AG04450 (cell line): ENCODE measurements at regions of chr3 and their contacts with region 1.

Region 1: DNA sequence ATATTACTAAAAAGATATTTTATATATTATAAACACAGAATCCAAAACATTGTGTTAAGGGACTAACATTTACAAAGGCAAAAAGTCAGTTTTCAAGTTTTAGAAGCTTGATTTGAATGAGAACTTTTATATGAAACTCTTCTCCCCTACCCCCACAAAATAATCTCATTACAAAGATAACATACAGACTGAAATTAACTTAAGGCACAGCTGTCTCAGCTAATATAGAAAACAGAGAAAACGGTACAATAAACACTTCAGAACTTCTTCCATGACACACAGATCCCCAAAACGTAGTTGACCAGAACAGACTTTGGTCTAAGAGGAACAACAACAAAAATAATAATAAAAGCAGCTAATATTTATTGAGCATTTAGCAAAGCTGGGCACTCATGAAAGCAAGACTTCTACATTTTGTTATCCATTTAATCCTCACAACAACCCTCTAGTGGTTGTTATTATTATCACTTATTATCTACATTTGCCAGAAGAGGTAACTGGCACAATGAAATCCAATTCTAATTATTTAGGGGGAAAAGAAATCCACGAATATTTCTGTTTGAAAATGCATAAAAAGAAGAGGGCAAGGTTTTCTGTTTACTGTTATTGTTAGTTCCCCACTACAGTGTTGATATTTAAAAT is 68.1 kb downstream of the PFN2 start:
- DNase-seq: no peak
- H3K4me3 ChIP-seq: no peak overlapping the region
- H3K27ac ChIP-seq: no peak overlapping the region
- H3K27me3 ChIP-seq: no peaks in the 10 kb centered on the region
- CTCF ChIP-seq: peak; percentile 36

Region 2: GRCh38 chr3:149832086-149832485 is 70.5 kb before region 1 on chr3:
- CTCF ChIA-PET with region 1: no interaction called
- POLR2A ChIA-PET with region 1: no interaction called
- DNase-seq: no peak
- H3K4me3 ChIP-seq: no peak overlapping the region
- H3K27ac ChIP-seq: no peak overlapping the region
- H3K27me3 ChIP-seq: no peaks in the 10 kb centered on the region
- CTCF ChIP-seq: no peak

Region 3: DNA sequence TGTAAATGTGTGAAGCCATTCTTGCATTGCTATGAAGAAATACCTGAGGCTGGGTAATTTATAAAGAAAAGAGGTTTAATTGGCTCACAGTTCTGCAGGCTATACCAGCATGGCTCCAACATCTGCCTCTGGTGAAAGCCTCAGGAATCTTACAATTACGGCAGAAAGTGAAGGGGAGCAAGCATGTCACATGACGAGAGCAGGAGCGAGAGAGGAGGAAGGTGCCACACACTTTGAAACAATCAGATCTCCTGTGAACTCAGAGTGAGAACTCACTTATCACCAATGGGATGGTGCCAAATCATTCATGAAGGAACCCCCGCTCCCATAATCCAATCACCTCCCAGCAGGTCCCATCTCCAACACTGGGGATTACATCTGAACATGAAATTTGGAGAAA is 291.9 kb after region 1 on chr3:
- CTCF ChIA-PET with region 1: no interaction called
- POLR2A ChIA-PET with region 1: no interaction called
- DNase-seq: no peak
- H3K4me3 ChIP-seq: no peak overlapping the region
- H3K27ac ChIP-seq: no peak overlapping the region
- H3K27me3 ChIP-seq: no peaks in the 10 kb centered on the region
- CTCF ChIP-seq: no peak

Region 4: DNA sequence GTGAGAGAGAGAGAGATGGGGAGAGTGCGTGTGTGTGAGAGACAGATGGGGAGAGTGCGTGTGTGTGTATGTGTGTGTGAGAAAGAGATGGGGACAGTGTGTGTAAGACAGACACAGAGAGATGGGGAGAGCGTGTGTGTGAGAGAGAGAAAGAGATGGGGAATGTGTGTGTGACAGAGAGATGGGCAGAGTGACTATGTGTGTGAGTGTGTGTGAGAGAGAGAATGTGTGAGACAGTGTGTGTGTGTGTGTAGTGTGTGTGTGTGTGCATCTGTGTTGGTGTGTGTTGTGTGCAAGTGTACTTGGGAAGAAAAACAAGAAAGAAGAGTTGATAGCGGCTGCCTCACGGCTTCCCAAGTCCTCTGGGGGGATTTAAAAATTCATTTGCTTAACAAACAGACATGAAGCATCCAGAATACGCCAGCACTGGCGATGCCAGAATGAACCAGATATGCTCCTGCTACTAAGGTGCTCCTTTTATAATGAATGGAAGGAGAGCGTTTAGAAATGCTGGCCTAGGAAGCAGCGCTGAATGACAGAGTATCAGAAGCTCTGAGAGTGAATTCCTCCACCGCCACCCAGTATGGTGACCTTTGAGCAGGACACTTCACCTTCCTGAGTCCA is 319.4 kb after region 1 on chr3:
- CTCF ChIA-PET with region 1: no interaction called
- POLR2A ChIA-PET with region 1: interaction called, 10 read pairs
- DNase-seq: no peak
- H3K4me3 ChIP-seq: no peak overlapping the region
- H3K27ac ChIP-seq: no peak overlapping the region
- H3K27me3 ChIP-seq: no peaks in the 10 kb centered on the region
- CTCF ChIP-seq: no peak